ENCODE measurements at regions of chr2 and their contacts with region 1.

Region 1: GRCh38 chr2:176638167-176639015 is 369.1 kb downstream of the MTX2 start:
- DNase-seq: peak; percentile 88
- H3K4me3 ChIP-seq: peak overlapping the region; percentile 38 to 78 (median 59)
- H3K27ac ChIP-seq: peak overlapping the region; percentile 28 to 93 (median 86)
- H3K4me1 ChIP-seq: peaks cover 0 to 27% (median 11%) of the 10 kb centered on the region in 6 donors
- H3K27me3 ChIP-seq: peaks cover 0 to 84% (median 40%) of the 10 kb centered on the region in 7 donors
- CTCF ChIP-seq: peak in 9 of 11 experiments; percentile 11 to 75 (median 69)
- POLR2A ChIP-seq: no peak

Region 2: GRCh38 chr2:176554101-176555048 is 84.0 kb before region 1 on chr2:
- intact Hi-C with region 1: loop called (anchors 10 kb)
- DNase-seq: no peak
- H3K4me3 ChIP-seq: peak overlapping the region; percentile 30 to 68 (median 37)
- H3K27ac ChIP-seq: peak overlapping the region; percentile 4 to 83 (median 76)
- H3K4me1 ChIP-seq: peaks cover 0 to 19% (median 11%) of the 10 kb centered on the region in 6 donors
- H3K27me3 ChIP-seq: peaks cover 0 to 71% (median 7%) of the 10 kb centered on the region in 7 donors
- CTCF ChIP-seq: peak; percentile 38 to 88 (median 67)
- POLR2A ChIP-seq: no peak

Region 3: GRCh38 chr2:177187631-177188312 is 549.4 kb after region 1 on chr2:
- intact Hi-C with region 1: no loop called
- DNase-seq: no peak
- H3K4me3 ChIP-seq: no peak overlapping the region
- H3K27ac ChIP-seq: no peak overlapping the region
- H3K4me1 ChIP-seq: no peaks in the 10 kb centered on the region
- H3K27me3 ChIP-seq: no peaks in the 10 kb centered on the region
- CTCF ChIP-seq: no peak
- POLR2A ChIP-seq: no peak